ENCODE measurements at regions of chr3 and their contacts with region 1.

Region 1: GRCh38 chr3:177197041-177197727 is at the start of gene TBL1XR1:
- DNase-seq: peak; percentile 75 to 95 (median 87)
- ATAC-seq: peak; percentile 66 to 69 (median 68)
- H3K4me3 ChIP-seq: peak within 1 kb of the TSS; percentile 88 to 91
- H3K4me3 Mint-ChIP-seq: peak within 1 kb of the TSS; percentile 97
- H3K27ac ChIP-seq: peak within 1 kb of the TSS; percentile 93
- H3K27ac Mint-ChIP-seq: peak within 1 kb of the TSS; percentile 96
- H3K4me1 ChIP-seq: peaks cover 38 to 39% of the 10 kb centered on the region in 2 experiments
- H3K4me1 Mint-ChIP-seq: peaks cover 64 to 67% (median 64%) of the 10 kb centered on the region in 3 donors
- H3K27me3 ChIP-seq: no peaks in the 10 kb centered on the region
- H3K27me3 Mint-ChIP-seq: no peaks in the 10 kb centered on the region
- total RNA-seq, gene TBL1XR1: 120 to 156 (median 140) TPM

Region 2: DNA sequence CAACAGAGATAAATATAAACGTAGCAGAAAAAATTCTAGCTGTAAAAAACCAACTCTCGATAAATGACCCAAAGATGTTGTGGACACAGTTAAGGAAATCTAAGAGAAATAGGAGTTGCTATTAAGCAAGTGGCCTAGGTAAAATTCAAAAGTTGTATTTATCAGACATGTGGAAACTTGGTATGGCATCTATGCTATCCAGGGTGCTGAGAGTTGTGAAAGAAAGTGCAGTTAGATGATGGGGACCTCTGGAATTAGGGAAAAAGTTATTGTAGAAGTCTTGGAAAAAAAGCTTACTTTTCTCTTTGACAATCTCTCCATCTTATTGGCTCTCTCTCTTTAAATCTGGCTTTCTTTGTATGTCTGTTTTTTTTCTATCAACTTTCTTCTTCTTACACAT is 1090.8 kb before region 1 on chr3:
- CTCF ChIA-PET with region 1: no interaction called
- POLR2A ChIA-PET with region 1: no interaction called
- DNase-seq: no peak
- ATAC-seq: no peak
- H3K4me3 ChIP-seq: no peak overlapping the region
- H3K4me3 Mint-ChIP-seq: no peak overlapping the region
- H3K27ac ChIP-seq: no peak overlapping the region
- H3K27ac Mint-ChIP-seq: no peak overlapping the region
- H3K4me1 ChIP-seq: no peaks in the 10 kb centered on the region
- H3K4me1 Mint-ChIP-seq: no peaks in the 10 kb centered on the region
- H3K27me3 ChIP-seq: no peaks in the 10 kb centered on the region
- H3K27me3 Mint-ChIP-seq: no peaks in the 10 kb centered on the region

Region 3: DNA sequence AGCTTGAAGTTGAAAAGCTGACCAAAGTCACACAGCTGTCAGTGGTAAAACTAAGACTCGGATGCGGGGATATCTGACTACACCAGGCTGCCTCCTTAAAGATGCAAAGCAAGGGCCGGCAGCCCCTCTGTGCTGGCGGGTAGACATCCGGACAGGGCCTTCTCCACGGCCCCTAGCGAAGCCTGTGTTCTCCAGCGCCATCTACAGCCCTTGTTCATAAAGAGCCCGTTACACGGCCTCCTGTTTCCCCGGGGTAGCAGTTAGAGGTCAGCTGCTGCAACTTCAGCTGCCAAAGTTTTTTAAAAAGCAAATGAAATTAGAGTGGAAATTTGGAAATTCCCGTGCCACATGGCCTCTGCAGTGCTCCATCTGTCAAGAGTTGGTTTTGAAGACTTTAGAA is 382.9 kb before region 1 on chr3:
- CTCF ChIA-PET with region 1: no interaction called
- POLR2A ChIA-PET with region 1: no interaction called
- DNase-seq: no peak
- ATAC-seq: no peak
- H3K4me3 ChIP-seq: no peak overlapping the region
- H3K4me3 Mint-ChIP-seq: no peak overlapping the region
- H3K27ac ChIP-seq: no peak overlapping the region
- H3K27ac Mint-ChIP-seq: no peak overlapping the region
- H3K4me1 ChIP-seq: no peaks in the 10 kb centered on the region
- H3K4me1 Mint-ChIP-seq: no peaks in the 10 kb centered on the region
- H3K27me3 ChIP-seq: peaks cover 0 to 4% of the 10 kb centered on the region in 2 experiments
- H3K27me3 Mint-ChIP-seq: peaks cover 3 to 9% of the 10 kb centered on the region in 2 donors

Region 4: DNA sequence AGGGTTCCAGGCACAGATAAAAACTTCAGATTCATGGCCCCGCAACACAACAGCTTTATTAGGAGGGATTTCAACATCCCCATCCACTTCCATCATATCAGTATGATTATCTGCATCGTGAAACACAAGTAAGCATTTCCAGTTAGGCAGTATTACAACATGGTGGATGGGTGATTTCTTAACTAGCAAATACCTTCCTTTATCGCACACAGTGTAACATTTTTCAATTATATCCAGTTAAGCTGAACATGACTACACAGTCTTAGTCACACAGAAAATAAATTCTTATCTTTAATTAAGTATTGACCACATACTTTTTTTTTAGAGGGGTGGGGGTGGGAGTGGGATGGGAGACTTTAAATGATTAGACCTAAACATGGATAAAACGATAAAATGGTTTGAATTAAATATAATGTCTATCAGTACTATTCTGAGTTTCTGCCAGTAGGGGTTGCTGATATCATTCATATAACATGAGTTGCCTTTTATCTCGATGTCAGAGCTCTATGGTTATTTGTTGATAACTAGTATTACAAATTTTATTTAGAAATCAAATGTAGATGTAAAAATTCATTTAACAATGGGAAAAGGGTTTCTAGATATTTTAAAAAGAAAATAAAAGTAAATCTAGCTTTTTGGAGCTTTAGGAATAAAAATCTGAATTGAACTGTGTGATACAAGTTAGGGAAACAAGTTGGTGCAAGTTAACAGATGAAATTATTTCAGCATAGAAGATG is 146.5 kb before region 1 on chr3:
- CTCF ChIA-PET with region 1: interaction called in 1 of 2 experiments, 23 read pairs
- POLR2A ChIA-PET with region 1: interaction called in 1 of 2 experiments, 6 read pairs
- DNase-seq: peak in 2 of 35 experiments; percentile 8 to 77
- ATAC-seq: peak; percentile 63 to 87 (median 66)
- H3K4me3 ChIP-seq: no peak overlapping the region
- H3K4me3 Mint-ChIP-seq: no peak overlapping the region
- H3K27ac ChIP-seq: no peak overlapping the region
- H3K27ac Mint-ChIP-seq: no peak overlapping the region
- H3K4me1 ChIP-seq: peaks cover 0 to 3% of the 10 kb centered on the region in 2 experiments
- H3K4me1 Mint-ChIP-seq: peaks cover 17 to 24% (median 19%) of the 10 kb centered on the region in 3 donors
- H3K27me3 ChIP-seq: no peaks in the 10 kb centered on the region
- H3K27me3 Mint-ChIP-seq: no peaks in the 10 kb centered on the region

Region 5: DNA sequence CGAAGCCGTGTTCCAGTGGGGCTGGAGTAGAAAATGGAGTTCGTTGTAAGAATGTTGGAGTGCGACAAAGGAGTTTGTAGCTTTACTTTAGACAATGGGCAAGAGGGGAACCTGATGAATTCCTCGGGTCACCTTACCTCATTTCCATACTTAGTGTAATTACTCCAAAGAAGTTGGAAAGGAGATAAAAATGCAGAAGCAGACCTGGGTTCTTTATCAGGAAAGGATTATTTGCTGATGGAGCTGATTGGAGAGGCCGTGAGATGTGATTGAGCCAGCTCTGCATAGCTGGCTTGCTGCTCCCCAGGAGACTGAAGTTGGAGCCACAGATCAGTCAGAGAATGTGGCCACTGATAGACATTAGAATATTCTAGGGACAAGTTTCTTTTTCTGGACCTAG is 33.5 kb after region 1 on chr3:
- CTCF ChIA-PET with region 1: no interaction called
- POLR2A ChIA-PET with region 1: interaction called in 1 of 2 experiments, 10 read pairs
- DNase-seq: no peak
- ATAC-seq: no peak
- H3K4me3 ChIP-seq: no peak overlapping the region
- H3K4me3 Mint-ChIP-seq: no peak overlapping the region
- H3K27ac ChIP-seq: no peak overlapping the region
- H3K27ac Mint-ChIP-seq: no peak overlapping the region
- H3K4me1 ChIP-seq: peaks cover 2 to 4% of the 10 kb centered on the region in 2 experiments
- H3K4me1 Mint-ChIP-seq: peaks cover 3 to 9% (median 5%) of the 10 kb centered on the region in 3 donors
- H3K27me3 ChIP-seq: no peaks in the 10 kb centered on the region
- H3K27me3 Mint-ChIP-seq: no peaks in the 10 kb centered on the region

Region 6: DNA sequence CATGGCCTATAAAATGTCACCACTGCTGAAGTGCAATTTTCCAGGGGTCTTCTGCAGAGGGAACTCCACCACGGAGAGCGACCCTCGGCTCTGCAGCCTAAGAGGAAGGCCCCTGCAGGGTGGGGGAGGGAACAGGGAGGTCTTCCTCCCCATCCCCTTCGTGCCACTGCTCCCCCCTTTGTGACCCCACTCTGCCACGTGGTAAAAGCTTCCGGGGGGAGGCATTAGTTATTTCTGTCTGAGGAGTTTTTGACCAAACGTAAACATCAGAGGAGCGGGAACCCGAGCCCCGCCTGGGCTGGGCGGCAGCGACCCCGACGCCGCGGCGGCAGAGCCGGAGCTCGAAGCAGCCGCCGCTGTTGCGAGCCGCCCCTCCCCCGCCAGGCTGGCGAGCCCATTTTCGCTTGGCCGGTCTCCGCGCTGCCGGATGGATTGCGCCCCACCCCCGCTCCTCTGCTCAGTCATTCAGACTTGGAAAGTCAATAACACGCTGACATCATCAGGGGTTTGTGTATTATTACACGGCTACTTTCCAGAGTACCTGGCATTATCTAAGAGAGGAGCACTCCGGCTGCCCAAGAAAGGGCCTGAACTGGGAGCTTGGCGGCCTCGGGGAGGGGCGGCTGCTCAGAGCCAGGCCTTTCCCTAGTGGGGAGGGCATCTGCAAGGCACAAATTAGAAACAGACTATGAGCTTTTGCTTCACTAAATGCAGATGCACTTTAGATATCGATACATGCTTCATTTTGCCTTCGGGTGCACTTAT is 162.6 kb after region 1 on chr3:
- CTCF ChIA-PET with region 1: interaction called, 4 to 19 read pairs
- POLR2A ChIA-PET with region 1: interaction called, 10 to 15 read pairs
- DNase-seq: peak; percentile 89 to 98 (median 95)
- ATAC-seq: peak; percentile 83 to 90 (median 86)
- H3K4me3 ChIP-seq: peak overlapping the region; percentile 72 to 83
- H3K4me3 Mint-ChIP-seq: peak overlapping the region; percentile 82 to 89 (median 87)
- H3K27ac ChIP-seq: peak overlapping the region; percentile 98
- H3K27ac Mint-ChIP-seq: peak overlapping the region; percentile 98 to 99
- H3K4me1 ChIP-seq: peaks cover 25 to 39% of the 10 kb centered on the region in 2 experiments
- H3K4me1 Mint-ChIP-seq: peaks cover 51 to 57% (median 52%) of the 10 kb centered on the region in 3 donors
- H3K27me3 ChIP-seq: no peaks in the 10 kb centered on the region
- H3K27me3 Mint-ChIP-seq: peaks cover 0 to 1% of the 10 kb centered on the region in 2 donors

Region 7: GRCh38 chr3:178084938-178085816 is 888.0 kb after region 1 on chr3:
- CTCF ChIA-PET with region 1: interaction called in 1 of 2 experiments, 13 read pairs
- POLR2A ChIA-PET with region 1: no interaction called
- DNase-seq: peak in 33 of 35 experiments; percentile 24 to 76 (median 51)
- ATAC-seq: peak; percentile 79 to 96 (median 84)
- H3K4me3 ChIP-seq: peak overlapping the region in 1 of 2 donors; percentile 10
- H3K4me3 Mint-ChIP-seq: peak overlapping the region; percentile 14 to 46 (median 42)
- H3K27ac ChIP-seq: no peak overlapping the region
- H3K27ac Mint-ChIP-seq: peak overlapping the region; percentile 56 to 79
- H3K4me1 ChIP-seq: peaks cover 5 to 42% of the 10 kb centered on the region in 2 experiments
- H3K4me1 Mint-ChIP-seq: peaks cover 37 to 52% (median 38%) of the 10 kb centered on the region in 3 donors
- H3K27me3 ChIP-seq: no peaks in the 10 kb centered on the region
- H3K27me3 Mint-ChIP-seq: no peaks in the 10 kb centered on the region